Lower leg skin (tissue), 4 donors: ENCODE measurements at regions of chr11 and their contacts with region 1.

Region 1: GRCh38 chr11:124673333-124674167 is at the starts of genes SIAE and SPA17:
- DNase-seq: peak; percentile 89 to 98
- H3K4me3 ChIP-seq: peak within 1 kb of the TSS; percentile 76
- CTCF ChIP-seq: no peak
- POLR2A ChIP-seq: no peak
- total RNA-seq, gene SIAE: 4.1 to 6.4 (median 6.1) TPM
- total RNA-seq, gene SPA17: 1.9 to 6.2 (median 2.9) TPM

Region 2: DNA sequence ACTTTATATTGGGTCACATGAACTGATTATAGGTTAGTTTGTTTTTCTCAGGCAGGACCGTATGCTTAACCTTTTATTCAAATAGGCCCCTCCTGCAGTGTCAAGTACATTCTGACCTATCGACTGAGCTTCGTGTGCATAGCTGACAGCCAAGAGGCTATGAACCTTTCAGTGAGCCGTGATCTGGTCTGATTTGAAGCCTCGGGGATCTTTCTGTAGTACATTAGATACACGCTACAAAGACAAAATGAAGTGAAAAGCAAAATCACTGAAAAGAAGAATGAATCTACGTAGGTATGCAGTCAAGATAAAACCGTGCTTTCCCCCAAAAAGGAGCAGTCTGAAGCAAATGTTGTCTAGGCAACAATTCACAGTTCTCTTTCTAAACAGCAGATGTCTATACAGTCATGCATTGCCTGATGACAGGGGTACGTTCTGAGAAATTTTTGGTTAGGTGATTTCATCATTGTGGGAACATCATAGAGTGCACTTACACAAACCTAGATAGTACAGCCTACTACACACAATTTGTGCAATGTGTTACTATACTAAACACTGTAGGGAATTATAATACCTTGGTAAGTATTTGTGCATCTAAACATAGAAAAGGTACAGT is 1772.9 kb before region 1 on chr11:
- intact Hi-C with region 1: no loop called
- DNase-seq: no peak
- H3K4me3 ChIP-seq: no peak overlapping the region
- CTCF ChIP-seq: no peak
- POLR2A ChIP-seq: no peak

Region 3: GRCh38 chr11:124763156-124763947 is 89.8 kb after region 1 on chr11:
- intact Hi-C with region 1: loop called (anchors 5 kb)
- DNase-seq: peak; percentile 66 to 95
- H3K4me3 ChIP-seq: peak overlapping the region; percentile 30
- CTCF ChIP-seq: no peak
- POLR2A ChIP-seq: no peak

Region 4: GRCh38 chr11:124837491-124837856 is 163.9 kb after region 1 on chr11:
- intact Hi-C with region 1: loop called (anchors 10 kb)
- DNase-seq: no peak
- H3K4me3 ChIP-seq: no peak overlapping the region
- CTCF ChIP-seq: no peak
- POLR2A ChIP-seq: no peak